HepG2 (cell line): ENCODE measurements at regions of chr1 and their contacts with region 1.

Region 1: GRCh38 chr1:219439376-219439775 is 173.5 kb downstream of the ZC3H11B start:
- DNase-seq: no peak
- ATAC-seq: no peak
- H3K4me3 ChIP-seq: no peak overlapping the region
- H3K27ac ChIP-seq: no peak overlapping the region
- H3K4me1 ChIP-seq: peaks cover 6% of the 10 kb centered on the region; the same call in 1 of the 2 replicates
- H3K27me3 ChIP-seq: no peaks in the 10 kb centered on the region
- CTCF ChIP-seq: no peak
- EP300 ChIP-seq: no peak
- POLR2A ChIP-seq: no peak
- RAD21 ChIP-seq: no peak

Region 2: GRCh38 chr1:219463636-219464035 is 24.3 kb after region 1 on chr1:
- CTCF ChIA-PET with region 1: no interaction called
- POLR2A ChIA-PET with region 1: no interaction called
- in situ Hi-C with region 1: no loop called
- intact Hi-C with region 1: loop called (anchors 1 kb)
- DNase-seq: no peak
- ATAC-seq: no peak
- H3K4me3 ChIP-seq: no peak overlapping the region
- H3K27ac ChIP-seq: no peak overlapping the region
- H3K4me1 ChIP-seq: no peaks in the 10 kb centered on the region
- H3K27me3 ChIP-seq: no peaks in the 10 kb centered on the region
- CTCF ChIP-seq: no peak
- EP300 ChIP-seq: no peak
- POLR2A ChIP-seq: no peak
- RAD21 ChIP-seq: no peak